Activated CD4-positive, alpha-beta T cell treated with anti-CD3 and anti-CD28 coated beads for 36 hours (primary cell): ENCODE measurements at regions of chr6 and their contacts with region 1.

Region 1: DNA sequence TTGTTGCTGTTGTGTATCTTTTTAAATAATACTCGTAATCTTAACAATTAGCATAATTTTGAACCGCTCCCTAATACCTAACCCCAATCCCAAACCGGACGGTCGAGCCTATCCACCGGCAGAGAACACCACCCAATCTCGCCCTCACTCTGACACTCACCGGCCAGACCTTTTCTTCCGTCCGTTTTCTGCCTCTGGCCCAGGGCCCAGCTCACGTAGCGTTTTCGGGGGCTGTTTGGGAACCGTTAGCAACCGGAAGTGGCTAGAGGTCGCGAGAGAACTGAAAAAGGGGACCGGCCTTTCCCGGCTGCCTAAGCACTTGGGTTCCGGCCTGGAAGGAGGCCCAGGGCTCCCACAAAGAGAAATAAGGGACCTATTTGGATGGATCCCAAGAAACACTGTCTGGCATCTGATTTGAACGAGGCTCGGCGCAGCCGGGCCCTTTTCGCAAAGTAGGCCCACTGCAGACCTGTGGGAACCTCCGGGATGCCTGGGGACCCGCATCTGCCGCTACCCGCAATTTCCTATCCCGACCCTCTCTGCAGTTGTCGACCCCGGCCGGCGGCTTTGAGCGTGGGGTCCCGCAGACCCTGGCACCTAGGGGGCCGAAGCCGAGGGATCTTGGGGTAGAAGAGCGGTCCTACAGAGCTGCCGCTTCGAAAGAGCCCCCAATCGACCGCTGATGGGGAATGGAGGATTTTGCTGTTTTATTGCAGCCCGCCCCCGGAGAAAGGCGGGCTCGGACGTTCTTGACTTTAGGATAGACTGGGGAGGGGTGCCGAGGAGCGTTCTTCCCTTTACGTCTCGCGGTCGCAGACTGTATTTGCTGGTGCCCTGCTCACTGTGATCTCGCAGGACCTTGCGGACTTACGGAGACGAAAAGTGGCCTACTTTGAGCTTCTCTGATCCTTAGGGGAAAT is 4.8 kb upstream of the ZKSCAN8 start:
- DNase-seq: peak; percentile 85
- ATAC-seq: peak; percentile 45
- H3K4me3 Mint-ChIP-seq: peak overlapping the region; percentile 87
- H3K27ac Mint-ChIP-seq: peak overlapping the region; percentile 96
- H3K4me1 Mint-ChIP-seq: peaks cover 70% of the 10 kb centered on the region
- H3K27me3 Mint-ChIP-seq: no peaks in the 10 kb centered on the region

Region 2: DNA sequence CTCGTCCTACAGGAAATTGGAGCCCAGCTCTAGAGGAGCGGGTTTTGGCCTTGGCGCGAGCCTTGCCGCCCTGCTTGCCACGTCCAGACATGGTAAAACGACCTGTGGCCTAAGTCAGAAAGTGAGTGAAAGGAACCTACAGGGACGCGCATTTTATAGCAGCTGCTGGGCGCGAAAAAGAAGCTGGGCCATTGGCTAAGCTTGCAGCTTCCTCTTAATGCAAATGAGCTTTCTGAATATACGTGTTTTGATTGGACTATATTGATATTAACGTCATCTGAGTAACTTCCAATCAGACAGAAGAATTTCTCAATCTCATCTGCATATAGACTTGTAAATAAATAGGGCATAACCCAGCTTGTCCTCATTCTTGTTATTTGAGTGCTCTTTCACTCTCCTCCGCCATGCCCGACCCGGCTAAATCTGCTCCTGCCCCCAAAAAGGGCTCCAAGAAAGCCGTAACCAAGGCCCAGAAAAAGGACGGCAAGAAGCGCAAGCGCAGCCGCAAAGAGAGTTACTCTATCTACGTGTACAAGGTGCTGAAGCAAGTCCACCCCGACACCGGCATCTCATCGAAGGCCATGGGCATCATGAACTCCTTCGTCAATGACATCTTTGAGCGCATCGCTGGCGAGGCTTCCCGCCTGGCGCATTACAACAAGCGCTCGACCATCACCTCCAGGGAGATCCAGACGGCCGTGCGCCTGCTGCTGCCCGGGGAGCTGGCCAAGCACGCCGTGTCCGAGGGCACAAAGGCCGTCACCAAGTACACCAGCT is 243.6 kb before region 1 on chr6:
- CTCF ChIA-PET with region 1: no interaction called
- POLR2A ChIA-PET with region 1: no interaction called
- intact Hi-C with region 1: loop called in 1 of 2 experiments (anchors 5 kb)
- DNase-seq: peak; percentile 94
- ATAC-seq: peak; percentile 64
- H3K4me3 Mint-ChIP-seq: no peak overlapping the region
- H3K27ac Mint-ChIP-seq: no peak overlapping the region
- H3K4me1 Mint-ChIP-seq: peaks cover 31% of the 10 kb centered on the region
- H3K27me3 Mint-ChIP-seq: no peaks in the 10 kb centered on the region

Region 3: GRCh38 chr6:28060405-28060804 is 76.4 kb before region 1 on chr6:
- CTCF ChIA-PET with region 1: no interaction called
- POLR2A ChIA-PET with region 1: no interaction called
- intact Hi-C with region 1: no loop called
- DNase-seq: no peak
- ATAC-seq: no peak
- H3K4me3 Mint-ChIP-seq: no peak overlapping the region
- H3K27ac Mint-ChIP-seq: no peak overlapping the region
- H3K4me1 Mint-ChIP-seq: no peaks in the 10 kb centered on the region
- H3K27me3 Mint-ChIP-seq: peaks cover 24% of the 10 kb centered on the region

Region 4: DNA sequence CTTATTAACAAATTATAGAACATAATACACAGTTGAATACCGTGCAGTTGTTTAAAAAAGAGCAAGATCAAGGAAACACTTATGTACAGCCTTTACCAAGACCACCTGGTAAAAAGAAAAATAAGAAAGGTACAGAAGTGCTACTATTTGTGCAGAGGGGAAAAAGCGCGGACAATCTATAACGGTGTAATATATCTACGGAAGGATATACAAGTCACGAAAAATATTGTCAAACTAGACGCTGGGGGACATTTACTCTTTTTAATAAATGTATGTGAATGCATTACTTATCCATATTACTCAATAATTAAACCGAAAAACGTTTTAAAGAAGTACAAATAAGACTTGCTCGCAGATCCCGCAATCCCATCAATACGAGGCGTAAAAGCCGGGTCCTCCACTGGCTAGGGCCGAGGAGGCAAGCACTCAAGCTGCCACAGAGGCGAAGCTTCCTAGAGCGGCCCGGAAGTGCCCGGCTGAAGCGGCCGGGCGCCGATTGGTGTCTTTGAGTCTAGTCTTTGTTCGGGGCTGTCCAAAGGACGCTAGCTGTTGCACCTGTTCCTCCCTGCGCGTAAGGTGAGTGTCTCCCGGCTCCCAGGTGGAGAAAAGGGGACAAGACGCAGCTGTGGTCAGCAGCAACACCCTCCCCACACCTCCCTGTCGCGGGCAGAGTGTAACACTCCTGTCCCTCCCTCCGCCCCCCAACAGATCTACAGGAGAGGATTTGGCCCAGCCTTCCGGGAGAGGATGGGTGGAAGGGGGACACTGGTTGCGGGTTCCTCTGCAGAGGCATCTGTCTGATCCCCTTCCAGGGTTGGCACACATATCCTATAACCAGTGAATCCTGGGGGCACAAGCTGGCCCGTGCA is 12.5 kb before region 1 on chr6 and contains the start of gene ZSCAN16:
- CTCF ChIA-PET with region 1: interaction called, 10 read pairs
- POLR2A ChIA-PET with region 1: interaction called, 3 read pairs
- intact Hi-C with region 1: loop called (anchors 1 kb)
- DNase-seq: peak; percentile 82
- ATAC-seq: peak; percentile 94
- H3K4me3 Mint-ChIP-seq: peak within 1 kb of the TSS; percentile 89
- H3K27ac Mint-ChIP-seq: peak within 1 kb of the TSS; percentile 91
- H3K4me1 Mint-ChIP-seq: peaks cover 43% of the 10 kb centered on the region
- H3K27me3 Mint-ChIP-seq: no peaks in the 10 kb centered on the region
- total RNA-seq, gene ZSCAN16: 2.1 to 2.6 TPM

Region 5: DNA sequence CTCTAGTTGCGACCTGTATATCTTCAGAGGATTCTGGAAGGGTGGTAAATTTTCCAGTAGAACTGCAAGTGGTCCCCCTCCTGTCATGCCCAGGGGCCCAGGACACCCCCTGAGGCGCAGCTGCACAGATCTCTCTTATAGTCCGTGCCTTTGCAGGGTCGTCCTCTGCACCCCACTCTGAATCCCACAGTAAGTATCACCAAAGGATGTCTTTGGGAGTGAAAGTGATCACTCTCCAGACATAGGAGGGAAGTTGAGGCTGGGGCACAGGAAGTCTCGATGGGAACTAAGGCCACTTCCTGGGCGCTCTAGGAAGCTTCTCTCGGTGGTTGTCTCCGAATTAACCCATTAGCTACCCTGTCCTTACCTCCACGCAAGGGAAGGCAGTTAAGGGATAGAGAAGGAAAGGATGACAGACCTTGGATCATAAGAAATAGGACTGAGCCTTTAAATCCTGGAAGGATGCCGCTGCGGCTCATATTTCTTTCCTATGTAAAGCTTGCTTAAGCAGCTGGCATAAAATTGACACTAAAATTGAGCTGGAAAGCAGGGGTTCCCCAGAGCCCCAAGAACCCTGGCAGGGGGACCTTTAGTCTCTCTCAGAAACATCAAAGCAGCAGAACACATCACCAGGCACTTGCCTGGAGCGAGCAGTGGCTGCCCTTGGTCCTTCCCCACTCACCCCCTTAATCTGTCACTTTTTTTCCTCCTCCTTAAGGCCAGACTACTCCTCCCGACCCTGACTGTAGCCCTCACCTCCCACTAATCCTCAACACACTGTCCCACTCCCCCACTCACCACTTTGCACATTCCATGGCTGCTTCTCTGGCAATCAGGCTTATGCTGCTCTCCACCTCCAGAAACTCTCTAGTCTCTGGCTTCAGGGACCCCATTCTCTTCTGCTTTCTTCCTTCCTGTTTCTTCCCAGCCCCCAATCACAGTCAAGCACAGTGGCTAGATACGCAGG is 115.4 kb after region 1 on chr6 and contains the start of gene ZKSCAN4:
- CTCF ChIA-PET with region 1: interaction called, 3 read pairs
- POLR2A ChIA-PET with region 1: interaction called, 4 read pairs
- intact Hi-C with region 1: loop called (anchors 1 kb)
- DNase-seq: peak; percentile 85
- ATAC-seq: peak; percentile 83
- H3K4me3 Mint-ChIP-seq: peak within 1 kb of the TSS; percentile 99
- H3K27ac Mint-ChIP-seq: peak within 1 kb of the TSS; percentile 96
- H3K4me1 Mint-ChIP-seq: peaks cover 14% of the 10 kb centered on the region
- H3K27me3 Mint-ChIP-seq: peaks cover 1% of the 10 kb centered on the region
- total RNA-seq, gene ZKSCAN4: 3.2 to 4.1 TPM

Region 6: DNA sequence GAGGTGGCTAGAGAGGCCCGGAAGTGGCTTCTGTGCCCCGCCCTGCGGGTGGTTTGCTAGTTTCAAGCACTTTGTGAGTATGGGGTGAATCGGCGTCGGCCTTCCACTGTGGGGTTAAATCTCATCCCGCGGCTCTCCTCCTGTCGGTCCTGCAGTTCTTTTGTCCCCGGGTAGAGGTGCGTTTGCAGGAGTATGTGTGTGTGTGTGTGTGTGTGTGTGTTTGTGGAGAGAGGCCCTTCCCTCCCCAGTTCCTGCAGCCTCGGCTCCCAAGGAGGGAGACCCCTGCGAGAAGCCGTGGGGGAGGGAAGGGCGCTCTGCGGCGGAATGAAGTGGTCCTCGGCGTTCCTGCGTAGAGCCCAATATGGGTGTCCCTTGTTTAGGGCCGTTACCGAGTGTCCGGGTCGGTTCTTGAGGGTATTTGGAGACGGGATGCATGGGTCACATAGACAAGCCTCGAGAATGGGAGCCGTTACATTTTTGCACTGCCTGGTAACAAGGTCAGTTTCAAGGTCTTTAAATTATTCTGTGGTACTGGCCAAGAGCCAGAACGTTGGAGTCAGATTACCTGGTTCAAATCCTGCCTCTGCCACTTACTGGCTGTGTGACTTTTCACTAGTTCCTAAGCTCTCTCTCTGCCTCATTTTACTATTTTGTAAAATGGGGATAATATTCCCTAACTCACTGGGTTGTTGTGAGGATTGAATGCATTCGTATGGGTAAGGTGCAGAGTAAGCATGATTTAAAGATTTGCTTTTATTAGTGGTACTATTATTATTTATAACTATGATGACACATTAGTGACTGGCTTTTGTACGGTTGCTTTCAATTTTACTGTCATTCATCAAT is 213.3 kb after region 1 on chr6 and contains the start of gene ZKSCAN3:
- CTCF ChIA-PET with region 1: no interaction called
- POLR2A ChIA-PET with region 1: interaction called, 5 read pairs
- intact Hi-C with region 1: loop called in 1 of 2 experiments (anchors 2 kb)
- DNase-seq: peak; percentile 94
- ATAC-seq: peak; percentile 100
- H3K4me3 Mint-ChIP-seq: peak within 1 kb of the TSS; percentile 96
- H3K27ac Mint-ChIP-seq: peak within 1 kb of the TSS; percentile 93
- H3K4me1 Mint-ChIP-seq: peaks cover 22% of the 10 kb centered on the region
- H3K27me3 Mint-ChIP-seq: peaks cover 7% of the 10 kb centered on the region
- total RNA-seq, gene ZKSCAN3: 2.2 to 3.1 TPM

Region 7: GRCh38 chr6:28542440-28543296 is 405.8 kb after region 1 on chr6:
- CTCF ChIA-PET with region 1: no interaction called
- POLR2A ChIA-PET with region 1: no interaction called
- intact Hi-C with region 1: loop called in 1 of 2 experiments (anchors 5 kb)
- DNase-seq: peak; percentile 80
- ATAC-seq: peak; percentile 62
- H3K4me3 Mint-ChIP-seq: peak overlapping the region; percentile 72
- H3K27ac Mint-ChIP-seq: peak overlapping the region; percentile 75
- H3K4me1 Mint-ChIP-seq: peaks cover 36% of the 10 kb centered on the region
- H3K27me3 Mint-ChIP-seq: peaks cover 38% of the 10 kb centered on the region

Region 8: DNA sequence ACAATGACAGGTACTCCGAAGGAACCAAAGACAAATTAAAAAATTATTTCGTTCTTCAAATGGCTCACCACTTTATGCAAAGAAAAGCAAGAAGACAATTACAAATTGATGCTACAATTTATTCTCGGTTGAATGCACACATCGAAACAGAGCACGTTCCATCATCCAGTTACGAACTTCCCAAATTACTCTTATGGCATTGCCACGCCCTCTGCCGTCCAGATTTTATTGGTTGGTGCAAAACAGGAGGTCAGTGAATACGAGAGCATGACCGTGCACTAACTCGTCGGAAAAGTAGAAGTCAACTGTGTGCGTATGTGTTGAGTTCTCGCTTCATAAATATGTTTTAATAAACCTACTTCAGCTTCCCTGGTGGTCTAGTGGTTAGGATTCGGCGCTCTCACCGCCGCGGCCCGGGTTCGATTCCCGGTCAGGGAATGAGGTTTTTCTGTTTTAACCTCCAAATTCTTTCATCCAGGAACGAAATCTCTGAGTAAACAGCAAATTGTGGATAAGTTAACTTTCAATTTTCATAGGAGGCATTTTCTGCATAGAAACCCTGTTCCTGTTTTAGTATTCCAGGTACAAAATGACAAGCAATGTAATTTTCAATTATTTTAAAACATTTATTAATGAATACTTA is 845.1 kb after region 1 on chr6:
- CTCF ChIA-PET with region 1: no interaction called
- POLR2A ChIA-PET with region 1: no interaction called
- intact Hi-C with region 1: loop called in 1 of 2 experiments (anchors 5 kb)
- DNase-seq: peak; percentile 82
- ATAC-seq: peak; percentile 42
- H3K4me3 Mint-ChIP-seq: peak overlapping the region; percentile 86
- H3K27ac Mint-ChIP-seq: peak overlapping the region; percentile 79
- H3K4me1 Mint-ChIP-seq: peaks cover 42% of the 10 kb centered on the region
- H3K27me3 Mint-ChIP-seq: peaks cover 47% of the 10 kb centered on the region